Natural killer cell (primary cell): ENCODE measurements at regions of chr4 and their contacts with region 1.

Region 1: GRCh38 chr4:87465739-87466366 is 43.5 kb downstream of the NUDT9 start:
- DNase-seq: peak in 1 of 2 donors; percentile 72
- ATAC-seq: peak in 2 of 3 donors; percentile 49 to 60
- H3K4me3 ChIP-seq: no peak overlapping the region
- H3K4me3 Mint-ChIP-seq: no peak overlapping the region
- H3K27ac ChIP-seq: no peak overlapping the region
- H3K27ac Mint-ChIP-seq: no peak overlapping the region
- H3K4me1 ChIP-seq: no peaks in the 10 kb centered on the region
- H3K4me1 Mint-ChIP-seq: no peaks in the 10 kb centered on the region
- H3K27me3 ChIP-seq: no peaks in the 10 kb centered on the region
- H3K27me3 Mint-ChIP-seq: no peaks in the 10 kb centered on the region
- CTCF ChIP-seq: peak; percentile 77

Region 2: GRCh38 chr4:87150498-87151261 is 315.2 kb before region 1 on chr4:
- intact Hi-C with region 1: loop called (anchors 2 kb)
- DNase-seq: peak in 1 of 2 donors; percentile 82
- ATAC-seq: peak; percentile 79 to 93 (median 85)
- H3K4me3 ChIP-seq: no peak overlapping the region
- H3K4me3 Mint-ChIP-seq: no peak overlapping the region
- H3K27ac ChIP-seq: no peak overlapping the region
- H3K27ac Mint-ChIP-seq: no peak overlapping the region
- H3K4me1 ChIP-seq: no peaks in the 10 kb centered on the region
- H3K4me1 Mint-ChIP-seq: peaks cover 6% of the 10 kb centered on the region in 2 donors
- H3K27me3 ChIP-seq: no peaks in the 10 kb centered on the region
- H3K27me3 Mint-ChIP-seq: no peaks in the 10 kb centered on the region
- CTCF ChIP-seq: peak; percentile 94

Region 3: GRCh38 chr4:87353592-87353991 is 112.3 kb before region 1 on chr4:
- intact Hi-C with region 1: loop called (anchors 5 kb)
- DNase-seq: peak in 1 of 2 donors; percentile 67
- ATAC-seq: peak in 2 of 3 donors; percentile 51 to 59
- H3K4me3 ChIP-seq: no peak overlapping the region
- H3K4me3 Mint-ChIP-seq: no peak overlapping the region
- H3K27ac ChIP-seq: no peak overlapping the region
- H3K27ac Mint-ChIP-seq: peak overlapping the region in 1 of 2 donors; percentile 45
- H3K4me1 ChIP-seq: no peaks in the 10 kb centered on the region
- H3K4me1 Mint-ChIP-seq: peaks cover 4 to 9% of the 10 kb centered on the region in 2 donors
- H3K27me3 ChIP-seq: no peaks in the 10 kb centered on the region
- H3K27me3 Mint-ChIP-seq: no peaks in the 10 kb centered on the region
- CTCF ChIP-seq: peak; percentile 32

Region 4: DNA sequence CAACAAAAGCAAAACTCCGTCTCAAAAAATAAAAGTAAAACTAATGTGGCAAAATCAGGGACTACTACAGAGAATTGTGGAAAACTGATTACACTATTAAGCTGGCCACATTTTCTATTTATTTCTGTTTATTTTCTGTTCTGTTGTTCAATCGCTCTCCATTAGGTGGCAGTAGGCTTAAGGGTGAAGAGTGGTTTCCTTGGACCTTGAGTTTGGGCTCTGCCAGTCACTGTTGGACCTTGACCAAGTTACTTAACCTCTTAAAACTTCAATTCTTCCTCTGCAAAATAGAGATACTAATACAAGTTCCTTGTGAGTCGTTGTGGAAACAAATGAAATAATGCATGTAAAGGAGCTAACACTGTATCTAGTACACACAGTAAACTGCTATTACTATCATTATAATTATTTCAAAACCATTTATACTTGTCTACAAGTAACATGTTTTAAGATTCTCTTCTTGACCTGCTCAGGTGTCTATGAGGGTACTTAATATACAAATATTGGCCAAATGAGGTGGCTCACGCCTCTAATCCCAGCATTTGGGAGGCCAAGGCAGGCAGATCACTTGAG is 90.0 kb before region 1 on chr4:
- intact Hi-C with region 1: loop called (anchors 1 kb)
- DNase-seq: peak in 1 of 2 donors; percentile 67
- ATAC-seq: peak; percentile 71 to 73 (median 73)
- H3K4me3 ChIP-seq: no peak overlapping the region
- H3K4me3 Mint-ChIP-seq: no peak overlapping the region
- H3K27ac ChIP-seq: no peak overlapping the region
- H3K27ac Mint-ChIP-seq: no peak overlapping the region
- H3K4me1 ChIP-seq: no peaks in the 10 kb centered on the region
- H3K4me1 Mint-ChIP-seq: peaks cover 0 to 5% of the 10 kb centered on the region in 2 donors
- H3K27me3 ChIP-seq: no peaks in the 10 kb centered on the region
- H3K27me3 Mint-ChIP-seq: no peaks in the 10 kb centered on the region
- CTCF ChIP-seq: peak; percentile 73

Region 5: DNA sequence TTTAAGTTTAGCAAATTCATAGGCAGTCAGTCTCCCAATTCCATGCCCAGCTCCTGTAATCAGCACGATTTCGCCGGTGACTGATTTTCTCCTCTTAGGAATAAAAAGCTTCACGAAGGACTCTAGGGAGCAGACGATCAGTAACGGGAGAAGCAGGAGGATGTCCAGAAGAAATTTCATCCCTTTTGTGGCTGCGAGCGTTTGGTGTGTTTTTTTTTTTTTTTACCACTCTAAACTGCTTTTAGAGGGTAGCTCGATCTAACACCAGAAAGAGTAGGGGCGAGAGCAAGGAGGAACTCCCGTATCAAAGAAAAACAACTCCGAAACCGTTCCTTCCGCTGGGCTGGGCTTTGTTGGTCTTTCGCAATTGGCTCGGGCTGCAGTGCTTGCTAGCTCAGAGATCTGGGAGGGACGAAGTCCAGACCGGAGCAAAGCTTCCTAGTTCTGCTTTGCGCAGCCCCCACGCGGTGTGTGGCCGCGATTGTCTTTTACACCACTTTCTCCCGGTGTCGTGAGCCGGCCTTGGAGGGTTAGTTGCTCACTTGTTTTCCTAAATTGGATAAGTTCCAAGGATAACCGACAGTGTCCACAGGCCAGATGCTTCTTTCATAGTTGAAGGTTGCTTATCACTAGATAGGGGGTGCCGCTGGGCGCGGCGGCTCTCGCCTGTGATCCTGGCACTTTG is 74.8 kb before region 1 on chr4 and contains the start of gene HSD17B11:
- intact Hi-C with region 1: loop called (anchors 5 kb)
- DNase-seq: peak; percentile 66 to 92
- ATAC-seq: peak; percentile 97 to 99 (median 98)
- H3K4me3 ChIP-seq: peak within 1 kb of the TSS; percentile 53
- H3K4me3 Mint-ChIP-seq: peak within 1 kb of the TSS; percentile 96
- H3K27ac ChIP-seq: peak within 1 kb of the TSS; percentile 63
- H3K27ac Mint-ChIP-seq: peak within 1 kb of the TSS; percentile 91
- H3K4me1 ChIP-seq: peaks cover 18% of the 10 kb centered on the region
- H3K4me1 Mint-ChIP-seq: peaks cover 46 to 47% of the 10 kb centered on the region in 2 donors
- H3K27me3 ChIP-seq: no peaks in the 10 kb centered on the region
- H3K27me3 Mint-ChIP-seq: no peaks in the 10 kb centered on the region
- CTCF ChIP-seq: no peak
- total RNA-seq, gene HSD17B11: 42.2 to 50.5 (median 49.8) TPM

Region 6: DNA sequence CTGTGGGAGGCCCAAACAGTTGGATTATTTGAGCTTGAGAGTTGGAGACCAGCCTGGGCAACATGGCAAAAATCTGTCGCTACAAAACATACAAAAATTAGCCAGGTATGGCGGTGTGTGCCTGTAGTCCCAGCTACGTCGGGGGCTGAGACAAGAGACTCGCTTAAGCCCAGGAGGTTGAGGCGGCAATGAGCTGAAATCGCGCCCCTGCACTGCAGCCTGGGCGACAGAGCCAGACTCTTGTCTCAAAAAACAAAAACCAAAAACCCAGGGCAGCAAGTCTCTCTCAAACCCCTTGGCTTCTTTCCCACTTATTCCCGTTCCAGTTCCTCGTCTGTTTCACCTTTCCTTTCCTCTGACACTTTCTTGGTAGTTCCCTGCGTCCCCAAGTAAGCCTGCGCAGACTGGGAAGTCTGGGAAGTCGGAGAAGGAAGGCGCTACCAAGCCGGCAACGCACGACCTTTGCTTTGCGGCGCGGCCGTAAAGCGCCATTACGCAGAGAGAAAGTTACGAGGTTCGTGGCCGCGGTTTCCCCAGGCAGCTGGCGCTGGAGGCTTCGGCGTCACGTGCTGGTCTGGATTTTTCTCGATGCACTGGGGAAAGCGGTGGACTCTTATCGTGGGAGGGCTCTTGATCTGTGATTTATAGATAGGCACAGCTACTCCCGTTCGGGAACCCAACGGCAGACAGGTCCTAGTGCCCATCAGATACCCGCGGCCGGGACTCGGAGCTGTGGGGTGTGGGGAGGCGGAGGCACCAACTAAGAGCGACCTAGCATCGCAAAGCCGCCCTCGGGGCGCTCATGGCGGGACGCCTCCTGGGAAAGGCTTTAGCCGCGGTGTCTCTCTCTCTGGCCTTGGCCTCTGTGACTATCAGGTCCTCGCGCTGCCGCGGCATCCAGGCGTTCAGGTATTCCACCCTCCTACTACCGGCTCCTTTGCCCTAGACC is 43.5 kb before region 1 on chr4 and contains the start of gene NUDT9:
- intact Hi-C with region 1: loop called (anchors 1 kb)
- DNase-seq: peak; percentile 91 to 93
- ATAC-seq: peak; percentile 85 to 92 (median 88)
- H3K4me3 ChIP-seq: peak within 1 kb of the TSS; percentile 64
- H3K4me3 Mint-ChIP-seq: peak within 1 kb of the TSS; percentile 99
- H3K27ac ChIP-seq: peak within 1 kb of the TSS; percentile 76
- H3K27ac Mint-ChIP-seq: peak within 1 kb of the TSS; percentile 98 to 100
- H3K4me1 ChIP-seq: peaks cover 14% of the 10 kb centered on the region
- H3K4me1 Mint-ChIP-seq: peaks cover 34% of the 10 kb centered on the region in 2 donors
- H3K27me3 ChIP-seq: no peaks in the 10 kb centered on the region
- H3K27me3 Mint-ChIP-seq: no peaks in the 10 kb centered on the region
- CTCF ChIP-seq: no peak
- total RNA-seq, gene NUDT9: 7.3 to 9.6 (median 9.5) TPM

Region 7: DNA sequence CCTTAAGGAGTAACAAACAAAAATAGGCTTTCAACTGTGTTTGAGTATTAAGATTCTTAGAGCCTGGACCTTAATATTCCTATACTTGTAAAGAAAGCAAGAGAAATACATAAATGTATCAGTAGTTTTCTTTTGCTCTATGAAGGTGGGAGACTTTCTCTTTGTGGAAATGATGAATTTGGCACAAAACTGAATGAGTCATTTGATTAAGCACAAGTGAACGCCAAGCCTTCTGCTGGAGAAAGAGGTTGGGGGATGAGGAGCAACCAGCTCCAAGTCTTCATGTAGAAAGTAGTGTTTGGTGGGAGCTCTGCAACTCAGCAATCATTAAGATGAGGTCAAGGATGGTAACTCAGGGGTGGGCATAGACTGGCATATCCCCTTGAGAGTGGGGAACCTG is 416.5 kb after region 1 on chr4:
- intact Hi-C with region 1: no loop called
- DNase-seq: no peak
- ATAC-seq: no peak
- H3K4me3 ChIP-seq: no peak overlapping the region
- H3K4me3 Mint-ChIP-seq: no peak overlapping the region
- H3K27ac ChIP-seq: no peak overlapping the region
- H3K27ac Mint-ChIP-seq: no peak overlapping the region
- H3K4me1 ChIP-seq: no peaks in the 10 kb centered on the region
- H3K4me1 Mint-ChIP-seq: no peaks in the 10 kb centered on the region
- H3K27me3 ChIP-seq: no peaks in the 10 kb centered on the region
- H3K27me3 Mint-ChIP-seq: peaks cover 10 to 31% of the 10 kb centered on the region in 2 donors
- CTCF ChIP-seq: no peak